Transverse colon (tissue), 4 donors: ENCODE measurements at regions of chr17 and their contacts with region 1.

Region 1: DNA sequence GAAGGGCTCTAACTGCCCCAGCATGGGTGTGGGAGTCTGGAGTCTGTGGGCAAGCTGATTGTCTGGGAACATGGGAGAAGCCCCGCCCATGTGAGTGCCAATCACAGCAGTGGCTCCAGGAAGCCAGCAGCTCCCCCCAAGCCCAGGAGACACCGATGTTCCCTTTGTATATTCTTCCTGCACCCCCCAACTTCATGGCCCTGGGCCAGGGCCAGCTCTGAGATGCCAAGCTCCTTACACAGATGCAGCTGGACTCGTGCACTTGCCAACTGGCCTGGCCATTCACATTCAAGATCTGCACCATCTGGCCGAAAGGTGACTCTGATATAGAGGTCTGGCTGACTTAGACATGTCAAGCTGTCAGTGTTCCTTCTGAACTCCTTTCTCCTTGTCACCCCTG is 50.5 kb downstream of the CACNG5 start:
- DNase-seq: no peak
- H3K4me3 ChIP-seq: no peak overlapping the region
- H3K27ac ChIP-seq: no peak overlapping the region
- H3K4me1 ChIP-seq: no peaks in the 10 kb centered on the region
- H3K27me3 ChIP-seq: no peaks in the 10 kb centered on the region
- CTCF ChIP-seq: no peak
- EP300 ChIP-seq: no peak
- POLR2A ChIP-seq: no peak

Region 2: GRCh38 chr17:66200685-66201092 is 684.7 kb before region 1 on chr17:
- in situ Hi-C with region 1: loop called in 1 of 4 experiments (anchors 25 kb)
- intact Hi-C with region 1: no loop called
- DNase-seq: peak; percentile 59
- H3K4me3 ChIP-seq: no peak overlapping the region
- H3K27ac ChIP-seq: no peak overlapping the region
- H3K4me1 ChIP-seq: no peaks in the 10 kb centered on the region
- H3K27me3 ChIP-seq: no peaks in the 10 kb centered on the region
- CTCF ChIP-seq: peak; percentile 38 to 84 (median 50)
- EP300 ChIP-seq: no peak
- POLR2A ChIP-seq: no peak

Region 3: DNA sequence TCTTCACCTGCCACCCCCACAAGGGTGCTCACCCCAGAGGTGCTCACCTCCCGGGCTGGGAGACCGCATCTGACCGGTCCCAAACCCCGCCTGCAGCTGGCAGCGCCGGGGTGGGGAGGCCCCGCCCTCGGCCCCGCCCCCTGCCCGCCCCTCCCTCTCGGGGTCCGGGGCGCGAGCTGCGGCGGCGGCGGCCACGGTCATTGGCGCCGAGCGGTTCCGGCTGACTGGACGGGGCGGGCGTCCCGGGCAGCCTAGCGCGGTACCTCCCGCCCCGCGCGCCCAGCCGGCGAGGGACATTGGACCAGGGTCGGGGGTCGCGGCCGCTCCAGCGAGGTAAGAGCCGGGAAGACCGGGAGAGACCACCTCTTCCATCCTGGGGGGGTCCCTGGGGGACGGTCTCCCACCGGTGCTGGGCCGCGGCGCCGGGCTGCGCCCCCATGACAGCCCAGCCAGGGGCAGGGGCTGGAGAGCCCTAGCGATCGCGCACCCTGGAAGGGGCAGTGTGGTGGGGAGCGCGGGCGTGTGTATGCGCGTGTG is 50.4 kb before region 1 on chr17 and contains the start of gene CACNG5:
- in situ Hi-C with region 1: no loop called
- intact Hi-C with region 1: no loop called
- DNase-seq: no peak
- H3K4me3 ChIP-seq: no peak within 1 kb of the TSS
- H3K27ac ChIP-seq: no peak within 1 kb of the TSS
- H3K4me1 ChIP-seq: no peaks in the 10 kb centered on the region
- H3K27me3 ChIP-seq: peaks cover 61% of the 10 kb centered on the region
- CTCF ChIP-seq: no peak
- EP300 ChIP-seq: no peak
- POLR2A ChIP-seq: no peak
- total RNA-seq, gene CACNG5: 0.32 TPM in 1 of 4 donors, not detected in the others